ENCODE measurements at regions of chr4 and their contacts with region 1.

Region 1: GRCh38 chr4:139656614-139657486 is 8.8 kb upstream of the MGST2 start:
- DNase-seq: peak; percentile 42
- H3K4me3 Mint-ChIP-seq: peak overlapping the region; percentile 73
- H3K27ac Mint-ChIP-seq: peak overlapping the region; percentile 94
- H3K4me1 Mint-ChIP-seq: peaks cover 45% of the 10 kb centered on the region
- H3K27me3 Mint-ChIP-seq: no peaks in the 10 kb centered on the region

Region 2: DNA sequence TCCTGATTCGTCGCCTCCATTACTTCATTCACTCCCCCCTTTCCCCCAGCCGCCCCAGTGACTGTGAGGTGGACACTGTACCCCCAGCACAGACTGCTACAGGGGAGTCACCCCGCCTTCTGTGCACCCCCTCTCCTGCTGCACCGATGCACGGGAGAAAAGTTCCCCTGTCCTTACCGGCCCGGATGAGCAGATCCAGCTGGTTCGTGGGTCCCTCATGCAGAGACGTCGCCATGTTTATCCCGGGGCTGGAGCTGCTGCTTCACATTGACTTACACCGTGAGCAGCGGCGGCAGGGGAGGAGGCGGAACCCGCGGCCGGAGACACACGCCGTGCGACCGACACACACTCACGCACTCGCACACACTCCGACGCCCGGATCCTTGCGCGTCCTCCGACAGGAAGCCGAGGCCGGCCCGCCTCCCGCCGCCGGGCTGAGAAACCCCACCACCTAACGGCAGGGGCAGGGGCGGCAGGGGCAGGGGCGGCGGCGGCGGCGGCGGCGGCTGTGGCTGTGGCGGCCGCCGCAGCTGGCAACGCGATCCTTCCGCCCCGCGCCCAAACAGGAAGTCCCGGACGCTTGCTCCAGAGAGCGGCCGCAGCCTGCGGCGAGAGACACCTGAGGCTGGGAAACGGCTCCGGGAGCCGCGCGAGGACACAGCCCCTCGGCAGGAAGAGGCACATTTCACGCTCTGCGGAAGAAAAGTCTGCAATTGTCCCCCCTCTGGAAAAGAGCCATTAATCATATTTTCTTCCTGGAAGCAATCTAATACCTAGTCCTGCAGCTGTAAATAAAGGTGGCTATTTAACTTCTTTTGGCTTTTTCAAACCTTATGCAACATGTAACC is 572.7 kb before region 1 on chr4:
- intact Hi-C with region 1: loop called (anchors 5 kb)
- DNase-seq: peak; percentile 78
- H3K4me3 Mint-ChIP-seq: peak overlapping the region; percentile 86
- H3K27ac Mint-ChIP-seq: peak overlapping the region; percentile 98
- H3K4me1 Mint-ChIP-seq: peaks cover 28% of the 10 kb centered on the region
- H3K27me3 Mint-ChIP-seq: no peaks in the 10 kb centered on the region

Region 3: DNA sequence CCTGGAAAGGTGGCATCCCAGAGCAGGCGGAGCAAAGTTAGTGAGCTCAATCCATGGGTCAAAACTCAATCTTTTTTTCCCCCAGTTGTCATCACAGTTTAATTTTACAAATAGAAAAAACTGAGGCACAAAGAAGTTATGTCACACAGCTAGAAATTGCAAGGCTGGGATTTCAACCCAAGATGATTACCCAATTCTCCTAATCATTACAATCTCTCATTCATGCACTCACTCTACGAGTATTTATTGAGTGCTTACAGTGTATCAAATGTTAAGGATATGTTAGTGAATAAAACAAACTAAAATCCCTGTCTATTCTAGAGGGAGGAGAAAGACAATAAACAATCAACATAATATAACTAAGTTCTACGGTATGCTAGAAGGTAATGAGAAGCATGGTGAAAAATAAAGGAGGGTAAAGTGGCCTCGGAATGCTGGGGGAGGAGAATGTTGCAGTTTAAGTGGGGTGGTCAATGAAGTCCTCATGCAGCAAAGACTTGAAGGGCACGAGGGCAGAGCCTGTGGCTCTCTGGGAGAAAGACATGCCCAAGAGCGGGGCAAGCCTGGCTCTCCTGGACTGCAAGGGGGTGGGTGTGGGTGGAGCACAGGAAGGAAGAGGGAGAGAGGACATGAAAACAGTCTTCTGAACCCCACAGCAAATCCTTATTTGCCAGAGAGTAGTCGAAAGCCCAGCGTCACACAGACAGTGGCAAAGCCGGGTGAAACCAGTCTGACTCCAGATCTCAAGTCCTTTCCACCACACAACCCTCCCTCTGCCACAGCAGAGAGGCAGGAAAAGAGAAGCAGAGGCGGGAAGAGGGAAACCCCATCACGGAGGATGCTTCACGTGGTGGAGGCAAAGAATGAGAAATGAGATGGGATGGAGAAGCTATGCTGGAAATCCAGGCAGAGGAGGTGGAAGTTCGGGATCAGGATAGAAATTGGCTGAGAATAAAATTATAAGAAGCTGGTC is 154.6 kb before region 1 on chr4:
- intact Hi-C with region 1: no loop called
- DNase-seq: no peak
- H3K4me3 Mint-ChIP-seq: no peak overlapping the region
- H3K27ac Mint-ChIP-seq: no peak overlapping the region
- H3K4me1 Mint-ChIP-seq: no peaks in the 10 kb centered on the region
- H3K27me3 Mint-ChIP-seq: no peaks in the 10 kb centered on the region

Region 4: GRCh38 chr4:139554893-139555704 is 101.8 kb before region 1 on chr4:
- intact Hi-C with region 1: loop called (anchors 1 kb)
- DNase-seq: peak; percentile 78
- H3K4me3 Mint-ChIP-seq: peak overlapping the region; percentile 93
- H3K27ac Mint-ChIP-seq: peak overlapping the region; percentile 96
- H3K4me1 Mint-ChIP-seq: peaks cover 47% of the 10 kb centered on the region
- H3K27me3 Mint-ChIP-seq: peaks cover 13% of the 10 kb centered on the region

Region 5: GRCh38 chr4:139682741-139683151 is 25.9 kb after region 1 on chr4:
- intact Hi-C with region 1: no loop called
- DNase-seq: no peak
- H3K4me3 Mint-ChIP-seq: no peak overlapping the region
- H3K27ac Mint-ChIP-seq: peak overlapping the region; percentile 52
- H3K4me1 Mint-ChIP-seq: peaks cover 29% of the 10 kb centered on the region
- H3K27me3 Mint-ChIP-seq: no peaks in the 10 kb centered on the region

Region 6: GRCh38 chr4:139694522-139695107 is 37.8 kb after region 1 on chr4:
- intact Hi-C with region 1: no loop called
- DNase-seq: no peak
- H3K4me3 Mint-ChIP-seq: no peak overlapping the region
- H3K27ac Mint-ChIP-seq: no peak overlapping the region
- H3K4me1 Mint-ChIP-seq: no peaks in the 10 kb centered on the region
- H3K27me3 Mint-ChIP-seq: no peaks in the 10 kb centered on the region

Region 7: GRCh38 chr4:139720540-139721205 is 63.8 kb after region 1 on chr4:
- intact Hi-C with region 1: no loop called
- DNase-seq: no peak
- H3K4me3 Mint-ChIP-seq: no peak overlapping the region
- H3K27ac Mint-ChIP-seq: no peak overlapping the region
- H3K4me1 Mint-ChIP-seq: no peaks in the 10 kb centered on the region
- H3K27me3 Mint-ChIP-seq: no peaks in the 10 kb centered on the region

Region 8: DNA sequence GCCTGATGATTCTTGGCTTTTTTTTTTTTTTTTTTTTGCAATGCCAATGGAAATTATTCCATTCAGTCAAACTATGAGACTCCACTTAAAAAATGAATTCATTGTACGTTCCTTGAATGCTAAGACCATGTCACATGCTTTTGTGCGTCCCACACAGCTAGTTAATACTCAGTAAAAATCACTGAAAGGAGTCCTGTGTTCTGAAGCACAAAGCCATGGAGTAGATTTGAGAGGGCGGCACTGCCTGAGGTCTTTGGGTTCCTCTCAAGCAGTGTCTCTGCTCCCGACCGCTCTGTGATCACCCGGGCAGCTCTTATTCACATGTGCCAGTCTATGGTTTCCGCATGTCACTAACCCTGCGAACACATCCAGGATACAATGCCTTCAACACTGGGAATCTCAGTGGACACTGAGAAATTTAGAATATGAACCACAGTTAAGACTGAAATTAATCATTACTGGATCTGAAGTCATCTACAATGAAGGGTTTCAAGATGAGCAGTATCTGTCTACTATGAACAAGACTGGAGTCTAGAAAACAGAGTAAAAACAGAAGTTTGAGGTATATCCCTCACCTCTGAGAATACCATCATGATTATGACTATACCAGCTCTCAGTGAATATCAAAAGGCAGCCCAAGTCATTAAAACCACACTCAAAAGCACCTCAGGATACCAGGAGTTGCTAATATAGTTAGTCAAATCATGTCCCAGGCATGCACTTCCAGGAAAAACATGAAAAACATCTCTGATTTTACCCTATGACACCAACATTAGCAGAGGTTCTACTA is 201.8 kb after region 1 on chr4:
- intact Hi-C with region 1: loop called (anchors 1 kb)
- DNase-seq: no peak
- H3K4me3 Mint-ChIP-seq: no peak overlapping the region
- H3K27ac Mint-ChIP-seq: no peak overlapping the region
- H3K4me1 Mint-ChIP-seq: peaks cover 33% of the 10 kb centered on the region
- H3K27me3 Mint-ChIP-seq: peaks cover 18% of the 10 kb centered on the region

Region 9: GRCh38 chr4:140071806-140072205 is 415.0 kb after region 1 on chr4:
- intact Hi-C with region 1: loop called (anchors 5 kb)
- DNase-seq: peak; percentile 62
- H3K4me3 Mint-ChIP-seq: peak overlapping the region; percentile 71
- H3K27ac Mint-ChIP-seq: peak overlapping the region; percentile 70
- H3K4me1 Mint-ChIP-seq: peaks cover 59% of the 10 kb centered on the region
- H3K27me3 Mint-ChIP-seq: peaks cover 48% of the 10 kb centered on the region

Region 10: DNA sequence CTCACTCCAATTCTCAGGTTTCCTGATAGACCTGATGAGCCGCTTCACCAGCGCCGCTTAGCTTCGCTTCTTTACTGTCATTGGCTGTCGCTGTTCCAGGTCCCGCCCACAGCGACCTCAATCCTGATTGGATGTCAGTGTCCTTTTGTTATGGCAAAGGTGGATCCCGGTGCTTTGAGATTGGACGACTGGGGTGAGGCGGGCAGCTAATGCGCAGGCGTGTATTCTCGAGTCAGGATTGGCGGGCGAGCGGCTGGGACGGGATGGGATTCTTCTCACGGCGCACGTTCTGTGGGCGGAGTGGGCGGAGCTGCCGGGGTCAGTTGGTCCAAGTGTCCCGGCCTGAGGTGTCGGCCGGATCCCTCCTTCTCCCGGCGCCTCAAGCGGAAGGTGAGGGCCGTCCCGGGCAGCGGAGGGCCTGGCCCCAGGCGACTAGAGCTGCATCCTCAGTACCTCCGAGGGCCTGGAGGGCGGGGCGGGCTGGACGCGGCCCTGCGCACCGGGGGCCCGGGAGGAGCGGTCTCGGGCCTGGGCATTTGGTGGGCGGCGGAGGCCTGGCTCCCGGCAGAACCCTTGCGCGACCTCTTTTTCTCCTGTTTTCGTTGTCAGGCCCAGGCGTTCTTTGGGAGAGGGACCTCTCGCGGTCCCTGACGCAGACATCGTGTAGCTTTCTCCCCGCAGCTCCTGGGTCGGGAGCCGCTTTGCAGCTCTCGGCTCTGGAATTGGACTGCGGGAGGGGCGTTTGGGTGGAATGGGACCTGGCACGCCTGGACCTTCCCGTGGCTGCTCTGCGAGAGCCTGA is 716.7 kb after region 1 on chr4 and contains the start of gene SCOC:
- intact Hi-C with region 1: loop called (anchors 1 kb)
- DNase-seq: peak; percentile 97
- H3K4me3 Mint-ChIP-seq: no peak within 1 kb of the TSS
- H3K27ac Mint-ChIP-seq: peak within 1 kb of the TSS; percentile 32
- H3K4me1 Mint-ChIP-seq: peaks cover 23% of the 10 kb centered on the region
- H3K27me3 Mint-ChIP-seq: no peaks in the 10 kb centered on the region
- total RNA-seq, gene SCOC: 33.9 and 34.0 TPM in 2 replicates

Measured in activated T-helper 1 cell treated with anti-CD3 and anti-CD28 coated beads, Interleukin-12 subunit alpha, Interleukin-12 subunit beta, Interleukin-2, Interleukin-4 antibody, amounts not matched to agents 30 ng/mL and 10 ng/mL and 1 ng/mL, durations not matched to agents 14 hours and 24 hours and 36 hours (primary cell).